ENCODE measurements at regions of chr12 and their contacts with region 1.

Region 1: GRCh38 chr12:52327052-52327829 is 6.0 kb upstream of the KRT83 start:
- DNase-seq: peak; percentile 93
- H3K4me3 ChIP-seq: no peak overlapping the region
- H3K27ac ChIP-seq: no peak overlapping the region
- H3K4me1 ChIP-seq: no peaks in the 10 kb centered on the region
- H3K27me3 ChIP-seq: peaks cover 33 to 41% of the 10 kb centered on the region in 2 experiments
- CTCF ChIP-seq: peak; percentile 95 to 96
- POLR2A ChIP-seq: no peak

Region 2: DNA sequence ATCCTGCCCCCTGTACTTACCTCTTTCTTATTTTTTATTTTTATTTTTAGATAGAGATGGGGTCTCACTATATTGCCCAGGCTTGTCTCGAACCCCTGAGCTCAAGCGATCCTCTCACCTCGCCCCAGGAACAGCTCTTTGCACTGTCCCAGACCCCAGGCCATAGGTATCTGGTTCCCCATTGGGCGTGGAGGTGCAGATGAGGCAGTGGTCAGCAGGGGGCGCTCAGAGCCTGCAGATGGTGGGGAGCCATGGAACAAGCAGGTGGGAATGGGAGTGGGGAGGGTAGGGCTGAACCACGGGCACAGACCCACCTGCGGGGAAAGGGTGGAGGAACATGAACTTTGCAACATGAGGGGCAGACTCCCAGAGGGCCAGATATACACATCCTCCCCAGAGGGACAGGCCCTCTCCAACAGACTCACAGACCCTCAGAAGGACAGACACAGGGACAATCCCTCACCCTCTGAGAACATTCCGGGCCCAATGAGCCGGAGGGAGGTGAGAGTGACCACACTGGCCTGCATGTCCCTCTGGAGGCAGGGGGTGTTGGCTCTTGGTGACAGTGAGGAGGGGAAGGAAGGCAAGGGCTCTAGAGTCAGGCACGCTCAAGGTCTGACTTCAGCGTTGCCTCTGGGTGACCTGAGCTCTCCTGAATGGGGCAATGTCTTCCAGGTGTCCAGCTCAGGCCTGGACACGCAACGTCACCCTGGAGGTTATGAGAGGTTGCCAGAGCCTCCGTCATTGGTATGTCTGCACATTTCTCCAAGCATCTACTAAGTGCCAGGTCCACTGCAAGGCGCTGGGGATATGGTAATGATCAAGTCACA is 170.3 kb before region 1 on chr12:
- CTCF ChIA-PET with region 1: interaction called, 87 read pairs
- POLR2A ChIA-PET with region 1: no interaction called
- dilution Hi-C with region 1: no loop called
- intact Hi-C with region 1: loop called (anchors 1 kb)
- DNase-seq: peak; percentile 58
- H3K4me3 ChIP-seq: no peak overlapping the region
- H3K27ac ChIP-seq: no peak overlapping the region
- H3K4me1 ChIP-seq: peaks cover 2% of the 10 kb centered on the region
- H3K27me3 ChIP-seq: no peaks in the 10 kb centered on the region
- CTCF ChIP-seq: peak; percentile 93 to 94
- POLR2A ChIP-seq: no peak

Region 3: DNA sequence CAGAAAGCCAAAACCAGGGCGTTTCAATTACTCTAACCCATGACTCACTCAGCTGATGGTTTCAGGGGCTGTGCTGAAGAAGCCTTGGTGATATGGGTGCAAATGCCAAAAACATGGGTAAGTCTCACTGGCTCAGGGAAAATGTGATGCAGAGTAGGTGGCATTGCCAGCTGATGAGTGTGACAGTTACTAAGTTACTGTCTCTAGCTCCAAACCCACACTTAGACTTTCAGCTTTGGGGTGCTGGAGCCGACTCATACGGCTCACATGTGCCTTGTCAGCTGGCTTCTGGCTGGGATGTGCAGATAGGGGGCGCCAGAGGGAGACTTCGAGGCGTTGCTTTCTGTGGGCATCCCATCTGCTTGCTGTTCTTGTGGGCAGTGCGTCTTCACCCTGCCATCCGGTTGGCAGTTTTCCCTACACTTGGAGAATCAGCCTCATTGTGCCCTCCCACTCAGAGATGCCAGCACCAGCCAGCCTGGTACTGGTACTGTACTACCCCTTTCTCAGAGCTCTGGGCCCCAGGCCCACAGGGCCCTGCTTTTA is 105.3 kb before region 1 on chr12:
- CTCF ChIA-PET with region 1: interaction called, 20 read pairs
- POLR2A ChIA-PET with region 1: no interaction called
- dilution Hi-C with region 1: no loop called
- intact Hi-C with region 1: no loop called
- DNase-seq: peak; percentile 44
- H3K4me3 ChIP-seq: no peak overlapping the region
- H3K27ac ChIP-seq: no peak overlapping the region
- H3K4me1 ChIP-seq: peaks cover 11% of the 10 kb centered on the region
- H3K27me3 ChIP-seq: no peaks in the 10 kb centered on the region
- CTCF ChIP-seq: peak; percentile 70 to 78
- POLR2A ChIP-seq: no peak

Region 4: DNA sequence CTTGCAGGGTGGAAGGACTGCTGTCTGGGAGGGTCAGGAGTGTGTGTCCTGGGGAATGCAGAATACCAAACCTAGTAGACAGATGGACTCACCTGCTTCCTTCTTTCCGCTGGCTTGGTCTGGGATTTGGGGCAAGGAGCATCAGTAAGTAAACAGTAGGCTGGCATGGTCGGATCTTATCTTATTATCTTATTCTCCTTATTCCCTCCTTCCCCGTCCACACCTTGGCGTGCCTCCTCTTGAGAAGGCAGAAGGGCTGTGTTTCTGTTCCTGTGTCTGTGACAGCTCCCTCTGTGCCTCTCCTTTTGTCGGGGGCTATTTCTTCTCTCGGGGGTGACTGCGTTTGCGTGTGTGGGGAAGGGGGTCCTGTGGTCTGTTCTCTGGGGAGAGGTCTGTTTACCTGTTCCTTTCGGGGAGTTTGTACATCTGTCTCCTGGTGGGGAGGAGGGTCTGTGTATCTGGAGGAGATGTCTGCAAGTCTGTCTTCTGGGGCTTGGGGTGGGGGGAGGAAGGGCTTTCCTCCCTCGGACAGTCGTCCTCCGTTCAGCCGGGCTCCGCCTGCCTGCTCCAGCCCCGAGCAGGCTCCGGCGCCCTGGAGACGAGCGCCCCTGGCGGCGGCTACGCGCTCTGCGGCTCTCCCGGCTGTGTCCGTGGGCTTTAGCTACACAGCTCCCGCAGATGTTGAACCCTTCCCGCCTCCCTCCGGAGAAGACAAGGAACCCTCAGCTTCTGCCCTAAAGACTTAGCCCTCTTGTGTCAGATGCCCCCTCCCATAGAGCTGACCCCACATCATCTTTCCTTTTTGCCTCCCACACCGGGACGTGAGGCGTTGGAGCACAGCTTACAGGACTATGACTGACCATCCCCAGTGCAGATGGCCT is 48.5 kb before region 1 on chr12:
- CTCF ChIA-PET with region 1: interaction called, 30 read pairs
- POLR2A ChIA-PET with region 1: no interaction called
- dilution Hi-C with region 1: no loop called
- intact Hi-C with region 1: no loop called
- DNase-seq: peak; percentile 64
- H3K4me3 ChIP-seq: no peak overlapping the region
- H3K27ac ChIP-seq: no peak overlapping the region
- H3K4me1 ChIP-seq: peaks cover 3% of the 10 kb centered on the region
- H3K27me3 ChIP-seq: peaks cover 12% of the 10 kb centered on the region in 2 experiments
- CTCF ChIP-seq: peak; percentile 98 to 100
- POLR2A ChIP-seq: no peak

Region 5: GRCh38 chr12:52307836-52308805 is 19.1 kb before region 1 on chr12:
- CTCF ChIA-PET with region 1: interaction called, 32 read pairs
- POLR2A ChIA-PET with region 1: no interaction called
- dilution Hi-C with region 1: no loop called
- intact Hi-C with region 1: no loop called
- DNase-seq: peak; percentile 13
- H3K4me3 ChIP-seq: no peak overlapping the region
- H3K27ac ChIP-seq: no peak overlapping the region
- H3K4me1 ChIP-seq: no peaks in the 10 kb centered on the region
- H3K27me3 ChIP-seq: peaks cover 59 to 62% of the 10 kb centered on the region in 2 experiments
- CTCF ChIP-seq: peak in 1 of 2 donors; percentile 12
- POLR2A ChIP-seq: no peak

Region 6: GRCh38 chr12:52338241-52338960 is 11.2 kb after region 1 on chr12:
- CTCF ChIA-PET with region 1: interaction called, 24 read pairs
- POLR2A ChIA-PET with region 1: no interaction called
- dilution Hi-C with region 1: no loop called
- intact Hi-C with region 1: no loop called
- DNase-seq: no peak
- H3K4me3 ChIP-seq: no peak overlapping the region
- H3K27ac ChIP-seq: no peak overlapping the region
- H3K4me1 ChIP-seq: no peaks in the 10 kb centered on the region
- H3K27me3 ChIP-seq: peaks cover 13 to 14% of the 10 kb centered on the region in 2 experiments
- CTCF ChIP-seq: no peak
- POLR2A ChIP-seq: no peak

Region 7: DNA sequence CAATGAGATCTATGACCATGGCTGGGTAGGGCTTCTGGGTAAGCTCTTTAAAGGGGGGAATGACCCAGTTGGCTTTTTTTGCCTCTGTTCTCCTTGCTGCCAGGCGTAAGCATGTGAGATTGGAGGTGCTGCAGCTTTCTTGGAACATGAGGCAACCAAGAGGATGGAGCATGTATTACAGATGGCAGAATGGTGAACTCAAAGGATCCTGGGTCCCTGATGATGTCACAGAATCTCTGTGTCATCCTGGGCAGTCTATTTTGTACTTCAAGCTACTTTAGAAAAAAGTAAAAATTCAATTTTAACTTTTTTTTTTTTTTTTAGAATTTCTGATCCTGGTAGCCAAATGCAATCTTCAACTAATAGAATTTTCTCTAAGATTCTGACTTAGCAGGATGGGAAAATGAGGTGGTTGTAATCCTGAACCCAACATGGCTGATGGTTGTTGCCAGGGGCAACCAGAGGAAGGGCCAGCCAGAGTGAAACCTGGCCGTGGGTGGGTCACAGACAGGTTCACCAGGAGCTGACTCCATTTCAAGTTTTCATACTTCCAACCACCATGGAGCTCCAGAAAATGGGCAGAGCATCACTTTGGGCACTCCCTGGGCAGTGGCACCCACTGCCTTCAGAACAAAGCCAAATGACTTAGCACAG is 71.1 kb after region 1 on chr12:
- CTCF ChIA-PET with region 1: no interaction called
- POLR2A ChIA-PET with region 1: no interaction called
- dilution Hi-C with region 1: no loop called
- intact Hi-C with region 1: no loop called
- DNase-seq: no peak
- H3K4me3 ChIP-seq: no peak overlapping the region
- H3K27ac ChIP-seq: no peak overlapping the region
- H3K4me1 ChIP-seq: no peaks in the 10 kb centered on the region
- H3K27me3 ChIP-seq: peaks cover 0 to 2% of the 10 kb centered on the region in 2 experiments
- CTCF ChIP-seq: no peak
- POLR2A ChIP-seq: no peak

Region 8: GRCh38 chr12:53575502-53576253 is 1248.4 kb after region 1 on chr12:
- CTCF ChIA-PET with region 1: no interaction called
- POLR2A ChIA-PET with region 1: no interaction called
- dilution Hi-C with region 1: no loop called
- intact Hi-C with region 1: no loop called
- DNase-seq: no peak
- H3K4me3 ChIP-seq: no peak overlapping the region
- H3K27ac ChIP-seq: no peak overlapping the region
- H3K4me1 ChIP-seq: no peaks in the 10 kb centered on the region
- H3K27me3 ChIP-seq: no peaks in the 10 kb centered on the region
- CTCF ChIP-seq: no peak
- POLR2A ChIP-seq: no peak